ENCODE measurements at regions of chr4 and their contacts with region 1.

Region 1: GRCh38 chr4:13541720-13542576 is 2.4 kb downstream of the NKX3-2 start:
- DNase-seq: peak in 1 of 2 experiments; percentile 38
- ATAC-seq: 0 out of 6 replicates have a peak, but pooled peaks of 1 of the 2 experiments have one; percentile 4
- H3K4me3 ChIP-seq: no peak overlapping the region
- H3K27ac ChIP-seq: no peak overlapping the region
- H3K4me1 ChIP-seq: no peaks in the 10 kb centered on the region; the same call in 2 of the 3 replicates
- CTCF ChIP-seq: peak; percentile 33
- EP300 ChIP-seq: no peak
- POLR2A ChIP-seq: no peak
- RAD21 ChIP-seq: peak; percentile 21 to 39; a peak in 2 of 5 replicates

Region 2: GRCh38 chr4:12852338-12853307 is 689.3 kb before region 1 on chr4:
- CTCF ChIA-PET with region 1: interaction called, 22 read pairs
- POLR2A ChIA-PET with region 1: no interaction called
- DNase-seq: peak; percentile 23 to 61
- ATAC-seq: peak; percentile 91 to 92
- H3K4me3 ChIP-seq: no peak overlapping the region
- H3K27ac ChIP-seq: peak overlapping the region; percentile 27 to 43; a peak in 4 of 6 replicates
- H3K4me1 ChIP-seq: peaks cover 5% of the 10 kb centered on the region; the same call in 2 of the 3 replicates
- CTCF ChIP-seq: peak; percentile 64
- EP300 ChIP-seq: no peak
- POLR2A ChIP-seq: no peak
- RAD21 ChIP-seq: peak; percentile 69 to 79

Region 3: GRCh38 chr4:13530823-13531624 is 10.9 kb before region 1 on chr4:
- CTCF ChIA-PET with region 1: interaction called, 22 read pairs
- POLR2A ChIA-PET with region 1: no interaction called
- DNase-seq: no peak
- ATAC-seq: no peak
- H3K4me3 ChIP-seq: no peak overlapping the region
- H3K27ac ChIP-seq: no peak overlapping the region
- H3K4me1 ChIP-seq: no peaks in the 10 kb centered on the region
- CTCF ChIP-seq: no peak
- EP300 ChIP-seq: no peak
- POLR2A ChIP-seq: no peak
- RAD21 ChIP-seq: no peak

Measured in A549 (cell line).